ENCODE measurements at regions of chr5 and their contacts with region 1.

Region 1: GRCh38 chr5:73591102-73591695 is 25.7 kb downstream of the UTP15 start:
- DNase-seq: peak; percentile 54
- H3K4me3 ChIP-seq: no peak overlapping the region
- H3K27ac ChIP-seq: peak overlapping the region in 1 of 2 experiments; percentile 70; a peak in 2 of 4 replicates
- H3K4me1 ChIP-seq: peaks cover 3 to 5% of the 10 kb centered on the region in 2 experiments; a peak in 3 of 4 replicates
- H3K27me3 ChIP-seq: no peaks in the 10 kb centered on the region
- CTCF ChIP-seq: peak; percentile 91
- EP300 ChIP-seq: no peak
- RAD21 ChIP-seq: peak; percentile 95

Region 2: GRCh38 chr5:73565139-73565968 is 25.8 kb before region 1 on chr5 and contains the starts of genes ANKRA2 and UTP15:
- CTCF ChIA-PET with region 1: interaction called, 13 read pairs
- POLR2A ChIA-PET with region 1: no interaction called
- DNase-seq: peak; percentile 91
- H3K4me3 ChIP-seq: peak within 1 kb of the TSS; percentile 94 to 99
- H3K27ac ChIP-seq: peak within 1 kb of the TSS; percentile 85 to 87
- H3K4me1 ChIP-seq: peaks cover 9 to 12% of the 10 kb centered on the region in 2 experiments; a peak in 3 of 4 replicates
- H3K27me3 ChIP-seq: no peaks in the 10 kb centered on the region
- CTCF ChIP-seq: no peak
- EP300 ChIP-seq: no peak
- RAD21 ChIP-seq: no peak
- polyA plus RNA-seq, gene ANKRA2: 14.5 and 20.5 TPM in 2 replicates
- polyA plus RNA-seq, gene UTP15: 10.2 and 12.6 TPM in 2 replicates

Region 3: DNA sequence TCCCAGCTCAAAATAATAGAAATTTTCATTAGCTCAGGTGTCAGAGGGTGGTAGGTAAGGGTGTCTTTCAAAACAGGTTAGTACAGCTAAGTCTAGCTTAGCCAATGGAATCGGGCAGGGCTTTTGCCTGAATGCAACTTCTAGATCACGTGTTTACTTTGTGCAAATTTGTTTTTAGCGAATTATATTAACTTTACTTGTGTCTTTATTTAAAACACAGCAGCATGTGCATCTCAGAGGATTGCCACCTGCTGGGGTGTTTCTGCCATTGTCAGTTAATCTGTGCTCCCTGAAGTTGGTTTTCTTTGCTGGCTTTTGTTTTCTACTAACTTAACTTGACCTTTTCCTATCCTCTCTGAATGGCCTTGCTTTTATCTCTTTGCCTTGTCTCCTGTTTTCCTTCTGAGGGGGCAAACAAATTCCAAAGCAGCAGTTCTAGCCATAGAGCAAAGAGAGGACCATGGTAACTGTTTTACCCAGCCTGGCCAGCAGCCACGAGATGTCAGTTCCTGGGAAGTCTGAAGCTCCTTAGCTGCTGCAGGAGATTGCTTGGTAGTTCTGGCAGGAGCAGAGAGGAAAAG is 102.4 kb after region 1 on chr5:
- CTCF ChIA-PET with region 1: interaction called, 37 read pairs
- POLR2A ChIA-PET with region 1: no interaction called
- DNase-seq: peak; percentile 16
- H3K4me3 ChIP-seq: no peak overlapping the region
- H3K27ac ChIP-seq: peak overlapping the region in 1 of 2 experiments; percentile 76; a peak in 2 of 4 replicates
- H3K4me1 ChIP-seq: peaks cover 0 to 27% of the 10 kb centered on the region in 2 experiments; a peak in 2 of 4 replicates
- H3K27me3 ChIP-seq: no peaks in the 10 kb centered on the region
- CTCF ChIP-seq: peak; percentile 71
- EP300 ChIP-seq: no peak
- RAD21 ChIP-seq: peak; percentile 41; the same call in 1 of the 2 replicates

Region 4: GRCh38 chr5:73759771-73760170 is 168.6 kb after region 1 on chr5:
- CTCF ChIA-PET with region 1: interaction called, 13 read pairs
- POLR2A ChIA-PET with region 1: no interaction called
- DNase-seq: no peak
- H3K4me3 ChIP-seq: no peak overlapping the region
- H3K27ac ChIP-seq: no peak overlapping the region
- H3K4me1 ChIP-seq: peaks cover 4 to 8% of the 10 kb centered on the region in 2 experiments; a peak in 3 of 4 replicates
- H3K27me3 ChIP-seq: no peaks in the 10 kb centered on the region
- CTCF ChIP-seq: no peak
- EP300 ChIP-seq: no peak
- RAD21 ChIP-seq: no peak

Region 5: DNA sequence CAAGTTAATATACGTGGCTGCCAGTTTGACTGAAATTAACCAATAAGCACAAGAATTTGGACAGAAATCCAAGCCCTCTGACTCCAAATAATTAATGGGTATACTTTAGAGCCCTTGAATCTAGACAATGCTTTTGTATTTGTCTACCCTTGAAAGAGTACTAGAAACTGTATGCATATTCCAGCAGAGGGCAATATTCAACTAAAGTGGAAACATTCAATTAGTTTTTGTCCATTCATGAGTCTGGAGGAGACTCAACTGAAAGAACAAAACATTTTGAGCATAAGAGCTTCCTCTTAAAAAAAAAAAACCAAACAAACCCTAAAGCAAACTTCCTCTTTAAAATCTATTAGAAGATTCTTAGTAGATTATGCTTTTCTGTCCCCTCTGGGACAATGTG is 192.6 kb after region 1 on chr5:
- CTCF ChIA-PET with region 1: interaction called, 398 read pairs
- POLR2A ChIA-PET with region 1: no interaction called
- DNase-seq: no peak
- H3K4me3 ChIP-seq: no peak overlapping the region
- H3K27ac ChIP-seq: no peak overlapping the region
- H3K4me1 ChIP-seq: no peaks in the 10 kb centered on the region
- H3K27me3 ChIP-seq: no peaks in the 10 kb centered on the region
- CTCF ChIP-seq: peak; percentile 49
- EP300 ChIP-seq: no peak
- RAD21 ChIP-seq: peak; percentile 27; the same call in 1 of the 2 replicates

Region 6: GRCh38 chr5:73812962-73813588 is 221.9 kb after region 1 on chr5:
- CTCF ChIA-PET with region 1: interaction called, 13 read pairs
- POLR2A ChIA-PET with region 1: no interaction called
- DNase-seq: no peak
- H3K4me3 ChIP-seq: no peak overlapping the region
- H3K27ac ChIP-seq: no peak overlapping the region
- H3K4me1 ChIP-seq: no peaks in the 10 kb centered on the region; a peak in 1 of 4 replicates
- H3K27me3 ChIP-seq: no peaks in the 10 kb centered on the region
- CTCF ChIP-seq: no peak
- EP300 ChIP-seq: no peak
- RAD21 ChIP-seq: no peak

Region 7: GRCh38 chr5:74648835-74649293 is 1057.7 kb after region 1 on chr5:
- CTCF ChIA-PET with region 1: interaction called, 11 read pairs
- POLR2A ChIA-PET with region 1: no interaction called
- DNase-seq: peak; percentile 69
- H3K4me3 ChIP-seq: no peak overlapping the region; a peak in 1 of 4 replicates
- H3K27ac ChIP-seq: no peak overlapping the region
- H3K4me1 ChIP-seq: peaks cover 7 to 11% of the 10 kb centered on the region in 2 experiments; a peak in 2 of 4 replicates
- H3K27me3 ChIP-seq: no peaks in the 10 kb centered on the region
- CTCF ChIP-seq: peak; percentile 80
- EP300 ChIP-seq: 0 out of 4 replicates have a peak, but pooled peaks of 1 of the 2 experiments have one; percentile 11
- RAD21 ChIP-seq: peak; percentile 95

Measured in SK-N-SH (cell line).